ENCODE measurements at regions of chr9 and their contacts with region 1.

Region 1: DNA sequence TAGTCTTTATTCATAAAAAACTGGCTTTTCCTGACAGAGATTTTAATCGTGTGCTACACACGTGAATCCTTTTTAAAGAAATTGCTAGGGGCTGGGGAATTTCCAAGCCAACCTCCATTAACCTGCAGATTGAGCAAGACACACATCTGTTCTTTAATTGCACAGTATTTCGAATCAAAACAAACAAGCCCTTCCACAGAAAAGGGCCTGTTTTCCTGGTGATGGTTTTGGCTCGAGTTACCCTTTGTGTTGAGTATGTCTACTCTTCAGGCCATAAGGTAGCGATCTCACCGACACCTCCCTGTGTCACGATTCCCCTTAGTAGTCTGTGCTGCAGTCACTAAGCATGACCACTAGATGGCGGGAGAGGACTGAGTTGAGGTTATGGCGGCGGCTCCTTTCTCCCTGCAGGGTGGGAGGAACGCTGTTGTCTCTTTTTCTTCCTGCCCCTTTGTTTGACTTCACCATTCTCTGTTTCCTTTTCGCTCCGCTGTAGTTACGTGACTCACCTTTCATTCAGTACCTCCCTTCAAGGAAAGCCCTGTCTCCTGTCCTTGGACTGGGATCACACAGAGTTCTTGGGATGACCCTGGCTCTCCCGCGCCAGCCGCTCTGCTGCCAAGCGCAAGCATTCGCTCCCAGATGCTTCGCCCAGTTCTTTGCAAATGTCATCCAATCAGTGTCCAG is 137.1 kb upstream of the SLC24A2 start:
- DNase-seq: peak; percentile 83
- H3K4me3 ChIP-seq: peak overlapping the region; percentile 32 to 49 (median 36)
- H3K27ac ChIP-seq: peak overlapping the region in 1 of 4 donors; percentile 38
- H3K4me1 ChIP-seq: peaks cover 0 to 12% (median 5%) of the 10 kb centered on the region in 4 donors
- H3K27me3 ChIP-seq: no peaks in the 10 kb centered on the region
- CTCF ChIP-seq: peak; percentile 82 to 96 (median 90)
- EP300 ChIP-seq: no peak
- POLR2A ChIP-seq: no peak

Region 2: GRCh38 chr9:19479874-19480273 is 446.1 kb before region 1 on chr9:
- intact Hi-C with region 1: loop called (anchors 5 kb)
- DNase-seq: no peak
- H3K4me3 ChIP-seq: no peak overlapping the region
- H3K27ac ChIP-seq: no peak overlapping the region
- H3K4me1 ChIP-seq: no peaks in the 10 kb centered on the region
- H3K27me3 ChIP-seq: no peaks in the 10 kb centered on the region
- CTCF ChIP-seq: no peak
- EP300 ChIP-seq: no peak
- POLR2A ChIP-seq: no peak

Region 3: GRCh38 chr9:19493174-19493811 is 432.7 kb before region 1 on chr9:
- intact Hi-C with region 1: loop called (anchors 5 kb)
- DNase-seq: no peak
- H3K4me3 ChIP-seq: peak overlapping the region in 3 of 4 donors; percentile 25 to 39 (median 30)
- H3K27ac ChIP-seq: peak overlapping the region; percentile 36 to 69 (median 45)
- H3K4me1 ChIP-seq: peaks cover 0 to 6% (median 4%) of the 10 kb centered on the region in 4 donors
- H3K27me3 ChIP-seq: no peaks in the 10 kb centered on the region
- CTCF ChIP-seq: peak in 3 of 4 experiments; percentile 35 to 74 (median 69)
- EP300 ChIP-seq: no peak
- POLR2A ChIP-seq: no peak

Region 4: GRCh38 chr9:20356403-20357035 is 430.6 kb after region 1 on chr9:
- intact Hi-C with region 1: loop called (anchors 10 kb)
- DNase-seq: peak; percentile 81
- H3K4me3 ChIP-seq: peak overlapping the region in 3 of 4 donors; percentile 19 to 24 (median 24)
- H3K27ac ChIP-seq: peak overlapping the region; percentile 49 to 76 (median 60)
- H3K4me1 ChIP-seq: peaks cover 0 to 45% (median 28%) of the 10 kb centered on the region in 4 donors
- H3K27me3 ChIP-seq: no peaks in the 10 kb centered on the region
- CTCF ChIP-seq: peak; percentile 26 to 69 (median 40)
- EP300 ChIP-seq: no peak
- POLR2A ChIP-seq: no peak

Region 5: DNA sequence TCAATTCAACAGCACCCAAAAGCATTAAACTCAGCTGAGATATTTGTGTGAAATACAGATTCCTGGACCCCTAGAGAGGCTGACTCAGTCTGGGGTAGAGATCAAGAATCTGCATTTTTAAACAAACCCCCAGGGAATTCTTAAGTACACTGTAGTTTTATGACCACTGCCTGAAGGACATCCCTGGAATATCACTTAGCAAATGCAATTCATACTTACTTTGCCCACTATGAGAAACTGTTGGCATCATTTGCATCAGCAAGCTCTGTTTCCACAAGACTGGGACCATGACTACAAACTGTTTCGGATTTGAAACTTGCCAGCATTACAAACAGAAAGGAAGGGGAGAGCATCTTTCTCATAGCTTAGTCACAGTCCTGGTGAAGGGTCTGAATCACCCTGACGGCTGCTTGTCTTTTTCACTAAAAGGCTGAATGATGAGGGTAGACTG is 632.6 kb after region 1 on chr9:
- intact Hi-C with region 1: loop called (anchors 10 kb)
- DNase-seq: no peak
- H3K4me3 ChIP-seq: no peak overlapping the region
- H3K27ac ChIP-seq: peak overlapping the region; percentile 7 to 70 (median 60)
- H3K4me1 ChIP-seq: peaks cover 2 to 79% (median 68%) of the 10 kb centered on the region in 4 donors
- H3K27me3 ChIP-seq: no peaks in the 10 kb centered on the region
- CTCF ChIP-seq: no peak
- EP300 ChIP-seq: no peak
- POLR2A ChIP-seq: no peak

Region 6: DNA sequence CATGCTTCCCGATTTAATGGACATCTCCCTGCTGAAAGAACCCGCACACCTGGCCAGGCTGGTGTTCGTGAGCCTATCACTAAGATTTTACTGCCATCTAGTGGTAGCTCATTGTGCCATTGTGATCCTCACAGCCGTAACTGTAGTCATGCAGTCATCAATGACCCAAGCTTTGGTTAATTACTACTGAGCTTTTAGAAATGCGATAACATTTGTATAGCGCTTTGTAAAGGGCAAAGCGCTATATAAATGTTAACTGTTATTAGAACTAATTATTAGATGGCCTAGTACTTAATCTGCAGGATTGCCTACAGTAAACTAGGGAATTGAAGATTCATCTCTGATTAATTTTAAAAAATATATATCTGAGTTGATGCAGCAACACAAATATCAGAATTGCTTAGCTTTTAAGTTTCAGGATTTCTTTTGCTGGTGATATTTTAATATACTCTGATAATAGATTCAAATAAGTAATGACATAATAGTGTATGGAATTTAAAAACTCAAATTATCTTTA is 1015.3 kb after region 1 on chr9:
- intact Hi-C with region 1: loop called (anchors 1 kb)
- DNase-seq: peak; percentile 76
- H3K4me3 ChIP-seq: no peak overlapping the region
- H3K27ac ChIP-seq: no peak overlapping the region
- H3K4me1 ChIP-seq: peaks cover 0 to 11% (median 1%) of the 10 kb centered on the region in 4 donors
- H3K27me3 ChIP-seq: no peaks in the 10 kb centered on the region
- CTCF ChIP-seq: peak; percentile 67 to 82 (median 75)
- EP300 ChIP-seq: no peak
- POLR2A ChIP-seq: no peak

Region 7: DNA sequence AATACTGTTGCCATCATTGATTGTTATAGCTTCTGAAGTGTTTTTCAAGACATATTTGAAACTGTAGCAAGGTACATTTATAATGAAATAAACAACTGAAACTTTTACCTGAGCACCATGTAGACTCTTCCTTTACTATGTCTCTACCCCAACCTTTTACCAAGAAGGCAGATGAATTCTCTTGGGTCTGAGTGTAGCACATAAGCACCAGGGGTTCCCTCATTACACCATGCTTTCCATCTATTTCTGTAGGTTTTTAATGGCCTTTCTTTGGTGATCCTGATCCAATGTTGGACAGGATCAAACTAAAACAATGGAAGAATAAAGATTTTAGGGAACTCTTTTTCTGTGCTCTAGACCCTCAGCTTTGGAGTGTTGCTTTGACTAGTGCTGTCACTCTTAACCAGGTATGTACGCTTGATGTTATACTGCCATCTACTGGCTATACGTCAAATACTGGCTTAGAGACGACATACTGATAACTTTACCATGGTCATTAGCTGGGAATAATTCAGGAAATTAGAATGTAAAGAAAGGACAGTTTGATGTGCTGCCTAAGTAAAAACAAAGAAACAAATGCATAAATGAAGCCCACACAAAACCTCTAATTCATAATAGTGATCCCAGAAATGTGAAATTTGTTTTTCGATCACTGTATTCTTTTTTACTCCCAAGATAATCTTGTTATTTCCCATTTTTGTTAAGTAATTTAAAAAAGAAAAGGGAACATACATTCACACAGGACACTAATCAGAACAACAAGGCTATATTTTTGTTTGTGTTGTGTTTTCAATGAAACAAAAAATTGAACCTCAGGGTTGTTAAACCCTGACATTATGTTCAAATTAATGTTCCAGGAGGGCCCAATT is 1185.0 kb after region 1 on chr9:
- intact Hi-C with region 1: loop called (anchors 5 kb)
- DNase-seq: no peak
- H3K4me3 ChIP-seq: no peak overlapping the region
- H3K27ac ChIP-seq: no peak overlapping the region
- H3K4me1 ChIP-seq: no peaks in the 10 kb centered on the region
- H3K27me3 ChIP-seq: no peaks in the 10 kb centered on the region
- CTCF ChIP-seq: peak; percentile 43 to 84 (median 68)
- EP300 ChIP-seq: no peak
- POLR2A ChIP-seq: no peak